Aorta (tissue), 5 donors: ENCODE measurements at regions of chr9 and their contacts with region 1.

Region 1: GRCh38 chr9:115042781-115043509 is 75.0 kb downstream of the TNC start:
- DNase-seq: peak in 1 of 2 donors; percentile 61
- ATAC-seq: peak; percentile 66
- H3K4me3 ChIP-seq: no peak overlapping the region
- H3K27ac ChIP-seq: peak overlapping the region; percentile 51 to 86
- H3K4me1 ChIP-seq: peaks cover 0 to 2% of the 10 kb centered on the region in 2 donors
- H3K27me3 ChIP-seq: no peaks in the 10 kb centered on the region

Region 2: DNA sequence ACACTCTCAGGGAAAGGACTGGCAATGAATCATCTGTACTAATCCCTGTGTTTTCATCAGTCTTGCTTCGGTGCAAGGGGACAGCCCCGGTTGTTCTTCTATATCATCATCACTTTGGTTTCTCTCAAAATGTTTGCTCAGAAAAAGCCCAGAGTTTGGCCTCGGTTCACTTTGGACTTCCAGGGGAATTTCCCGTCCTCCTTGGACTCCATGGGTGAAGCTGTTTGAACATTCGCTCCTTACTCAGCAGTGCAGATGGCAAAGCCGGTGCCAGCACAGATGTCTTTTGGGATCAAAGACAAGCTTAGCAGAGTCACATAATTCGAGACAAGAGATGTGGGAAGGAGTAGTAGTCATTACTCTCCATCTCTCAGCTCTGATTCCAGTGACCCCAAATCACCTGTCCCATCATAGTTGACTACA is 42.7 kb before region 1 on chr9:
- intact Hi-C with region 1: no loop called
- DNase-seq: no peak
- ATAC-seq: no peak
- H3K4me3 ChIP-seq: no peak overlapping the region
- H3K27ac ChIP-seq: no peak overlapping the region
- H3K4me1 ChIP-seq: no peaks in the 10 kb centered on the region
- H3K27me3 ChIP-seq: no peaks in the 10 kb centered on the region

Region 3: GRCh38 chr9:115085773-115086377 is 42.9 kb after region 1 on chr9:
- intact Hi-C with region 1: no loop called
- DNase-seq: no peak
- ATAC-seq: no peak
- H3K4me3 ChIP-seq: no peak overlapping the region
- H3K27ac ChIP-seq: no peak overlapping the region
- H3K4me1 ChIP-seq: no peaks in the 10 kb centered on the region
- H3K27me3 ChIP-seq: no peaks in the 10 kb centered on the region

Region 4: DNA sequence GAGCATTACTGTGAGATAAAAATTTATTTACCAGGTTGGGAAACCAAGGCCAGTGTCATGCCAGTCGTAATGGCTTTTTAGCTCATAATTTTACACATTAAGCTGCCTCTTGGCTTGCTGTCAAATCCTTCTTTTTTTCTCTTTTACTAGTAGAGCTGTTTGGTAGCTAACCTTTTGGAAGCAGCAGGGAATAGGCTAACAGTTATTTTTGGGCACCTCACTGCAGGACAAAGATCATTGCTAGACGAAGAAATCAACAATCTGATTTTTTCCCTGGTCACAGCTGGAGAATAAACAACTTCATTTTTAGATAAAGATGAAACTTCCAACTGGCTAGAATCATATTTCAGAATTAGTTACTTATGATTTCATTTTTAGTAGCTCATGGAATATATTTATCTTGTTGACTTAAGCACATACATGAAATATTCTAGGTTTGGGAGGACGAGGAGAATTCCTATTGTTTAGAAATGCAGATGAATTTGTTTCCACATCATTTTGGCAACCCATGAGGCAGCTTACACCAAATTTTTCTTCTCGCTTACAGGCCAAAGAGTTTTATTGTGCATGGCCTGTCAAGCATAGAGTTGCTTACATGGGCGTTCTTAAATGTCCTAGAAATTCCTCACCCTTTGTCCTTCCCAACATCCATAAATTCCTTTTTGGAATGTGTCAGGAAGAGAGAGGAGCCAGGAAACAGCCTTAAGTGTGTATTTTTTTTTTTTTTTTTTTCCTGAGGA is 55.5 kb after region 1 on chr9:
- intact Hi-C with region 1: no loop called
- DNase-seq: no peak
- ATAC-seq: peak; percentile 64
- H3K4me3 ChIP-seq: no peak overlapping the region
- H3K27ac ChIP-seq: no peak overlapping the region
- H3K4me1 ChIP-seq: peaks cover 2 to 6% of the 10 kb centered on the region in 2 donors
- H3K27me3 ChIP-seq: no peaks in the 10 kb centered on the region

Region 5: DNA sequence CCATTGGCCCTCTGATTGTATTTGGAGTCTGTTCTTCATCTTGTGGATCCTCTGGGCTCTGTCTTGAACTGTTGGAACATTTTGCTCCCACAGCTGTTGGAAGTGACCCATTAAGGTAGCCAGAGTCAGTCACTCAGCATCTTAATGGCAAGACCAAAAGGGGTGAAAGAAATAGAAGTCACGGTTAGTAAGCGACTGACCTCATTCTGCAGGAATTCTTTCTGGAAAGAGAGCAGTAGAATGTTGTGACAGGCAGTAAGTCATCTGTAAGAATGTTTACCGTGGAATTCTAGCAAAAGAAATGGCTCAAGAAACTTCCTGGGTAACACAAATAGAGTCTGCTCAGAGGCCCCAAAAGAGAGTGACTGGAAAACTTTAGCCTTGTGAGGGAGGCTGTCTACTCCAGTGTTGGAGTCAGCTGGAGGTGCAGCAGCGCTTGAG is 103.7 kb after region 1 on chr9:
- intact Hi-C with region 1: loop called in 1 of 2 experiments (anchors 5 kb)
- DNase-seq: peak in 1 of 2 donors; percentile 45
- ATAC-seq: peak; percentile 85
- H3K4me3 ChIP-seq: no peak overlapping the region
- H3K27ac ChIP-seq: peak overlapping the region; percentile 90 to 94
- H3K4me1 ChIP-seq: peaks cover 0 to 10% of the 10 kb centered on the region in 2 donors
- H3K27me3 ChIP-seq: no peaks in the 10 kb centered on the region

Region 6: GRCh38 chr9:115442054-115442453 is 399.1 kb after region 1 on chr9:
- intact Hi-C with region 1: loop called in 1 of 2 experiments (anchors 5 kb)
- DNase-seq: no peak
- ATAC-seq: peak; percentile 80
- H3K4me3 ChIP-seq: no peak overlapping the region
- H3K27ac ChIP-seq: peak overlapping the region; percentile 77 to 79
- H3K4me1 ChIP-seq: peaks cover 0 to 3% of the 10 kb centered on the region in 2 donors
- H3K27me3 ChIP-seq: no peaks in the 10 kb centered on the region

Region 7: GRCh38 chr9:116232425-116233159 is 1189.6 kb after region 1 on chr9:
- intact Hi-C with region 1: no loop called
- DNase-seq: no peak
- ATAC-seq: no peak
- H3K4me3 ChIP-seq: no peak overlapping the region
- H3K27ac ChIP-seq: no peak overlapping the region
- H3K4me1 ChIP-seq: no peaks in the 10 kb centered on the region
- H3K27me3 ChIP-seq: no peaks in the 10 kb centered on the region